Endothelial cell of umbilical vein (primary cell): ENCODE measurements at regions of chr7 and their contacts with region 1.

Region 1: GRCh38 chr7:51067757-51068156 is 248.9 kb downstream of the COBL start:
- DNase-seq: peak; percentile 89
- H3K4me3 ChIP-seq: no peak overlapping the region
- H3K27ac ChIP-seq: no peak overlapping the region
- H3K4me1 ChIP-seq: peaks cover 26% of the 10 kb centered on the region
- H3K27me3 ChIP-seq: no peaks in the 10 kb centered on the region
- CTCF ChIP-seq: peak; percentile 69 to 70
- POLR2A ChIP-seq: no peak

Region 2: GRCh38 chr7:50293509-50294179 is 774.1 kb before region 1 on chr7:
- CTCF ChIA-PET with region 1: no interaction called
- POLR2A ChIA-PET with region 1: no interaction called
- dilution Hi-C with region 1: no loop called
- intact Hi-C with region 1: no loop called
- DNase-seq: no peak
- H3K4me3 ChIP-seq: no peak overlapping the region
- H3K27ac ChIP-seq: no peak overlapping the region
- H3K4me1 ChIP-seq: no peaks in the 10 kb centered on the region
- H3K27me3 ChIP-seq: peaks cover 0 to 2% of the 10 kb centered on the region in 2 experiments
- CTCF ChIP-seq: no peak
- POLR2A ChIP-seq: no peak

Region 3: DNA sequence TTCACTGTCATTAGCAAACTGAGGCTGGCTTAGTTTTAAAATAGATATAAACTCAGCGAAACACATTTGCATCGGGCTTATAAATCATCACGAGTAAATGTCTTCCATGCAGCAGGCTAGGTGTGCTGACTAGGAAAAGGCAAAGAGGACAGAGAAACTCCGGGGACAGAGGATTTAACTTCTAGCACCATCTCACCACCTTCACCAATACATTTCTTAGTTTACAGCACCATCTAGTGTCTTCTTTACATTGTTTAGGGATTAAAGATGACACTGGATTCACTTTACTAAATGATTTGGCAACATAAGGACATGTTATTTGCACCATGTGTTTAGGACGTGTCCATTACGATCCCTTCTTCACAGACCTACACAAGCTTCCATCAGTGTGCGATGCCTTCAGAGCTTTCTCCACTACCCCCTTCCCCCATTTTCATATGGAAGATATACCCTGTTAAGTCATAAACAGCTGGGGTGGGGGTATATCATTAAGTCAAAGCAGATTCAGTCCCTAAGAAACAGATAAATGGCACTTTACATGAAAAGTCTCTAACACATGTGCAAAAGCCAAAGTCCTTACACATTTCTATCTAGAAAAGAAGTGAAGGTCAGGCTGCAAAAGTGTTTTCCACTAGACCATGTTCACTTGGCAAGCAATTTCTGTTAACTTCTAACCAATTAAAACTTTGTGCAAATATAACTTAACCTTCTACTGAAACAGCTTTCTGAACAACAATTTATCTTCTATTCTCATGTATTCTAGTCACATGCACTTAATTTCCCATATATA is 388.3 kb before region 1 on chr7:
- CTCF ChIA-PET with region 1: no interaction called
- POLR2A ChIA-PET with region 1: no interaction called
- dilution Hi-C with region 1: no loop called
- intact Hi-C with region 1: loop called (anchors 5 kb)
- DNase-seq: peak; percentile 41
- H3K4me3 ChIP-seq: no peak overlapping the region
- H3K27ac ChIP-seq: no peak overlapping the region
- H3K4me1 ChIP-seq: peaks cover 15% of the 10 kb centered on the region
- H3K27me3 ChIP-seq: no peaks in the 10 kb centered on the region
- CTCF ChIP-seq: peak in 1 of 2 donors; percentile 5
- POLR2A ChIP-seq: no peak

Region 4: GRCh38 chr7:50826371-50827172 is 241.2 kb before region 1 on chr7:
- CTCF ChIA-PET with region 1: no interaction called
- POLR2A ChIA-PET with region 1: no interaction called
- dilution Hi-C with region 1: no loop called
- intact Hi-C with region 1: loop called (anchors 1 kb)
- DNase-seq: peak; percentile 97
- H3K4me3 ChIP-seq: peak overlapping the region in 1 of 3 experiments; percentile 20
- H3K27ac ChIP-seq: peak overlapping the region; percentile 99
- H3K4me1 ChIP-seq: peaks cover 34% of the 10 kb centered on the region
- H3K27me3 ChIP-seq: no peaks in the 10 kb centered on the region
- CTCF ChIP-seq: peak in 1 of 2 donors; percentile 14
- POLR2A ChIP-seq: peak; percentile 43

Region 5: GRCh38 chr7:51123322-51124029 is 55.7 kb after region 1 on chr7:
- CTCF ChIA-PET with region 1: interaction called, 3 read pairs
- POLR2A ChIA-PET with region 1: no interaction called
- dilution Hi-C with region 1: no loop called
- intact Hi-C with region 1: loop called (anchors 1 kb)
- DNase-seq: no peak
- H3K4me3 ChIP-seq: no peak overlapping the region
- H3K27ac ChIP-seq: no peak overlapping the region
- H3K4me1 ChIP-seq: peaks cover 12% of the 10 kb centered on the region
- H3K27me3 ChIP-seq: peaks cover 0 to 1% of the 10 kb centered on the region in 2 experiments
- CTCF ChIP-seq: no peak
- POLR2A ChIP-seq: no peak